ENCODE measurements at regions of chr14 and their contacts with region 1.

Region 1: DNA sequence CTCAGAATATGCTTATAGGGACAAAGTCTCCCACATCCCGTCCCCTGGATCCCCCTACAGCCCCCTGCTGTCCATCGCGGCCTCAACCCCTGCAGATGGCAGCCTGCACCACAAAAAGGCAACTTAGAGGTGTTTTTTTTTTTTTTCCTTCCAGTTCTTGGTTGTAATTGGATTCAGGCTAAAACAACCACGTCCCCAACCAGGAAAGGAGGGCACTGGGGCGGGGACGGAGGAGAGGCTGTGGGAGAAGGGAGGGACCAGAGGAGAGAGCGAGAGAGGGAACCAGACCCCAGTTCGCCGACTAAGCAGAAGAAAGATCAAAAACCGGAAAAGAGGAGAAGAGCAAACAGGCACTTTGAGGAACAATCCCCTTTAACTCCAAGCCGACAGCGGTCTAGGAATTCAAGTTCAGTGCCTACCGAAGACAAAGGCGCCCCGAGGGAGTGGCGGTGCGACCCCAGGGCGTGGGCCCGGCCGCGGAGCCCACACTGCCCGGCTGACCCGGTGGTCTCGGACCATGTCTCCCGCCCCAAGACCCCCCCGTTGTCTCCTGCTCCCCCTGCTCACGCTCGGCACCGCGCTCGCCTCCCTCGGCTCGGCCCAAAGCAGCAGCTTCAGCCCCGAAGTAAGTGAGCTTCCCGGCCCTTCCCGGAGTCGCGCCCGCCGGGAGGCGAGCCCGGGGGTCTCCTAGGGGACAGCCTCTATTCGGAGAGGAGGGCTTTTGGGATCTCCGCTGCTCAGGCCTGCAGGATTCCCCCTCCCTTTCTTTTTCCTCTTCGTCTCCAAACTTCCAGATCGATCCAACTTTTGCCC is at the start of gene MMP14:
- DNase-seq: peak in 1 of 2 experiments; percentile 60
- H3K4me3 ChIP-seq: peak within 1 kb of the TSS; percentile 80 to 99 (median 87)
- H3K27ac ChIP-seq: peak within 1 kb of the TSS; percentile 53
- H3K4me1 ChIP-seq: peaks cover 8 to 17% (median 14%) of the 10 kb centered on the region in 4 experiments
- H3K27me3 ChIP-seq: no peaks in the 10 kb centered on the region
- CTCF ChIP-seq: peak; percentile 29 to 41 (median 34); a peak in 3 of 4 replicates
- EP300 ChIP-seq: no peak
- POLR2A ChIP-seq: peak; percentile 43 to 72; a peak in 2 of 3 replicates
- RAD21 ChIP-seq: peak; percentile 36 to 54
- total RNA-seq, gene MMP14: 83.1 and 86.8 TPM in 2 replicates

Region 2: GRCh38 chr14:22668417-22668816 is 168.1 kb before region 1 on chr14:
- CTCF ChIA-PET with region 1: no interaction called
- POLR2A ChIA-PET with region 1: no interaction called
- DNase-seq: no peak
- H3K4me3 ChIP-seq: no peak overlapping the region
- H3K27ac ChIP-seq: no peak overlapping the region
- H3K4me1 ChIP-seq: no peaks in the 10 kb centered on the region
- H3K27me3 ChIP-seq: no peaks in the 10 kb centered on the region
- CTCF ChIP-seq: no peak
- EP300 ChIP-seq: no peak
- POLR2A ChIP-seq: no peak
- RAD21 ChIP-seq: no peak

Region 3: DNA sequence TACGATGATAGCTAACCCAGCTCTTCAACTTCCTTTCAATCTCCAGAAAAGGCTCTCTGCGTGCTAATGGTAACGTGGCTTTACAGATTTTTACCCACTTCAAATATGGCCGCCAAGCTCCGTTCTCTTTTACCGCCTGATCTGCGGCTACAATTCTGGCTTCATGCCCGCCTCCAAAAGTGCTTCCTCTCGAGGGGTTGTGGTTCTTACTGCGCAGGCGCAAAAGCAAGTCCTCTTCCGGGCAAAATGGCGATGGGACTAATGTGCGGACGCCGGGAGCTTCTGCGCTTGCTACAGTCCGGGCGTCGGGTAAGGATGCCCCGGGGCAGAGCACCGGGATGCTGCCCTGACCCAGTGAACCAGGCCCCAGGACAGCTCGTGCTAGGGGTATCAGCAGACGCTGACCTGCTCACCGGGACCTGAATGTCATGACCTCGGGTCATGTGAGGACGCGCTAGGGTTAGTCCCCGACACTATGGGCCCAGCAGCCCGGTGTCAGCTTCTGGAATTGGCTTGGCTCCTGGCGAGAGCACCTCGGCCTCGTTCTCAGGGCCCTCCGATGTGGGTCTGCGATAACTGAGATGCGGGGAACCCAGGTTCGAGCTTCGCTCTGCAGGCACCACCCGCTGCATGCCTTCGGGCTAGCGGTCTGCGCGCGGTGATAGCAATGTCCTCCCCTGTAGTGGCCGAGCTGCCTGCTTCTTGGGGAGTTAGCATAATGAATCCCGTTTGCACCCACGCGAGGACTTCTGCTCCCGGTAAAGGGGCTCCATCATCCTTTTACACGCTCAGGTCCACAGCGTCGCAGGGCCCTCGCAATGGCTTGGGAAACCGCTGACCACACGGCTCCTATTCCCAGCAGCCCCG is 69.8 kb before region 1 on chr14 and contains the start of gene OXA1L:
- CTCF ChIA-PET with region 1: interaction called, 5 read pairs
- POLR2A ChIA-PET with region 1: interaction called, 10 read pairs
- DNase-seq: peak; percentile 78 to 90
- H3K4me3 ChIP-seq: peak within 1 kb of the TSS; percentile 87 to 97 (median 94)
- H3K27ac ChIP-seq: peak within 1 kb of the TSS; percentile 91
- H3K4me1 ChIP-seq: peaks cover 0 to 2% (median 0%) of the 10 kb centered on the region in 4 experiments; a peak in 2 of 7 replicates
- H3K27me3 ChIP-seq: no peaks in the 10 kb centered on the region
- CTCF ChIP-seq: no peak
- EP300 ChIP-seq: 0 out of 3 replicates have a peak, but pooled peaks of 1 of the 2 experiments have one; percentile 13
- POLR2A ChIP-seq: peak; percentile 50 to 81; a peak in 2 of 3 replicates
- RAD21 ChIP-seq: no peak
- total RNA-seq, gene OXA1L: 125 and 129 TPM in 2 replicates

Region 4: DNA sequence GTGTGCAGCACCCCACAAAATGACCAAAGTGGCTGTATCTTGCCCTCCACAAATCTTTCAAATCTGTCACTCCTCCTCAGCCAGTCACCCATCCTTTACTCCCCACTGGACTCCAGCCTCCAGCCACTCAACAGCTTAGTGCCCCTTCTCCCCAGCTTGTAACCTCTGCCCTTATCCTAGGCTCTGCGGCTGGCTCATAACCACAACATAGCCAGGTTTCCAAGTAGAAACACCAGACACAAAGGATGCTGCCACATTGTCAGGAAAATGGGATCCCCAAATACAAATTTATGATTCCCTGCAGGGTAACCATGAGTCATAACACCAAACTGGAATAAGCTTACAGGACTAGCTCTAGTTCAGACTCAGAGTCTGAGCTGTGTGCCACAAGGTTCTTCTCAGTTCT is 54.9 kb before region 1 on chr14:
- CTCF ChIA-PET with region 1: interaction called, 12 read pairs
- POLR2A ChIA-PET with region 1: interaction called, 3 read pairs
- DNase-seq: no peak
- H3K4me3 ChIP-seq: no peak overlapping the region
- H3K27ac ChIP-seq: no peak overlapping the region
- H3K4me1 ChIP-seq: no peaks in the 10 kb centered on the region; a peak in 1 of 7 replicates
- H3K27me3 ChIP-seq: no peaks in the 10 kb centered on the region
- CTCF ChIP-seq: no peak
- EP300 ChIP-seq: no peak
- POLR2A ChIP-seq: no peak
- RAD21 ChIP-seq: no peak

Region 5: GRCh38 chr14:22886500-22887259 is 50.2 kb after region 1 on chr14:
- CTCF ChIA-PET with region 1: interaction called, 1,562 read pairs
- POLR2A ChIA-PET with region 1: interaction called, 18 read pairs
- DNase-seq: peak in 1 of 2 experiments; percentile 87
- H3K4me3 ChIP-seq: peak overlapping the region; percentile 57 to 83 (median 65)
- H3K27ac ChIP-seq: peak overlapping the region; percentile 25
- H3K4me1 ChIP-seq: peaks cover 7 to 21% (median 12%) of the 10 kb centered on the region in 4 experiments
- H3K27me3 ChIP-seq: peaks cover 0 to 17% (median 11%) of the 10 kb centered on the region in 4 experiments; a peak in 6 of 7 replicates
- CTCF ChIP-seq: peak; percentile 17 to 35 (median 21); a peak in 3 of 4 replicates
- EP300 ChIP-seq: no peak
- POLR2A ChIP-seq: peak in 1 of 2 experiments; percentile 75; a peak in 2 of 3 replicates
- RAD21 ChIP-seq: peak in 1 of 2 experiments; percentile 6; a peak in 2 of 4 replicates

Region 6: GRCh38 chr14:22900081-22900799 is 63.7 kb after region 1 on chr14:
- CTCF ChIA-PET with region 1: interaction called, 34 read pairs
- POLR2A ChIA-PET with region 1: interaction called, 4 read pairs
- DNase-seq: peak in 1 of 2 experiments; percentile 58
- H3K4me3 ChIP-seq: 0 out of 8 replicates have a peak overlapping the region, but pooled peaks of 1 of the 4 experiments have one; percentile 13
- H3K27ac ChIP-seq: no peak overlapping the region
- H3K4me1 ChIP-seq: peaks cover 0 to 8% (median 4%) of the 10 kb centered on the region in 4 experiments; a peak in 2 of 7 replicates
- H3K27me3 ChIP-seq: peaks cover 10 to 35% (median 28%) of the 10 kb centered on the region in 4 experiments
- CTCF ChIP-seq: peak; percentile 1 to 75 (median 64)
- EP300 ChIP-seq: no peak
- POLR2A ChIP-seq: no peak
- RAD21 ChIP-seq: peak; percentile 64 to 75

Region 7: DNA sequence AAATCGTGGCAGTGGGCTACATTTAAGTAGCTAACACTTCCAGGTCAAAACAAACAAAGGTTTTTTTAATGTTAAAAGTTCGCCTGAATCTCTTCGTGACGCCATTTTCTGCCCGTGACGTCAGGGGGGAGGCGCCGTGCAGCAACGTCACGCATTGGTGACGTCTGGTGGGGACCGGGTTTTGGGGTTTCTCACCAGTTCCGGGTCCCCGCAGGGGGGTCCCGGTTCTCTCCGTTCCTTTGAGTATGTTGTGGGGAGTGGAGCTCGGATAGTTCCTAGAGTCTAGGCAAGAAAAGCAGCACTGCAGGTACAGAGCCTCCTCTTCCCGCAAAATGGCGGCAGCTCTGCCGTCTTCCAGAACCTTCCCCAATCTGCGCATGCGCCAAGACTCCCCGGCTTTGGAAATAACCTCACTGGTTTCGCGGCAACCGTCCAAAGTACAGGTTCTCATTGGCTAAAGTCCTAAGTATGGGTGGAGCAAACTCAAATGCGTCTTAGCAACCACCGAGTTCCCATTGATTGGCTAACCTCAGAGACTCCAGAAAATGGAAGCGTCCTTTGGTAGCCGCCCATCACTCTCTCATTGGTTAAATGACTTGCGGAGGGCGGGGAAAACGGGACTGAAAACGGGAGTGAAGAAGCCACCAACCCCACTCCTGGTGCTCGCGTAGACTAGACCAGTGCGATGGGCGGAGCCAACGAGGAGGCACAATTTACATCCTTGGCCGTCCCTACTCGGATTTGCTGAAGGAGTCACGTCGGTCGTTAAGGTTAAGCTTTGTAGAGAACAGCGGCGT is 82.5 kb after region 1 on chr14 and contains the start of gene RBM23:
- CTCF ChIA-PET with region 1: no interaction called
- POLR2A ChIA-PET with region 1: interaction called, 10 read pairs
- DNase-seq: peak; percentile 98 to 99
- H3K4me3 ChIP-seq: peak within 1 kb of the TSS; percentile 79 to 93 (median 92)
- H3K27ac ChIP-seq: peak within 1 kb of the TSS; percentile 98
- H3K4me1 ChIP-seq: peaks cover 0 to 7% (median 3%) of the 10 kb centered on the region in 4 experiments; a peak in 5 of 7 replicates
- H3K27me3 ChIP-seq: no peaks in the 10 kb centered on the region; a peak in 1 of 7 replicates
- CTCF ChIP-seq: no peak
- EP300 ChIP-seq: no peak
- POLR2A ChIP-seq: peak; percentile 80 to 98
- RAD21 ChIP-seq: no peak
- total RNA-seq, gene RBM23: 43.1 and 43.3 TPM in 2 replicates

Region 8: DNA sequence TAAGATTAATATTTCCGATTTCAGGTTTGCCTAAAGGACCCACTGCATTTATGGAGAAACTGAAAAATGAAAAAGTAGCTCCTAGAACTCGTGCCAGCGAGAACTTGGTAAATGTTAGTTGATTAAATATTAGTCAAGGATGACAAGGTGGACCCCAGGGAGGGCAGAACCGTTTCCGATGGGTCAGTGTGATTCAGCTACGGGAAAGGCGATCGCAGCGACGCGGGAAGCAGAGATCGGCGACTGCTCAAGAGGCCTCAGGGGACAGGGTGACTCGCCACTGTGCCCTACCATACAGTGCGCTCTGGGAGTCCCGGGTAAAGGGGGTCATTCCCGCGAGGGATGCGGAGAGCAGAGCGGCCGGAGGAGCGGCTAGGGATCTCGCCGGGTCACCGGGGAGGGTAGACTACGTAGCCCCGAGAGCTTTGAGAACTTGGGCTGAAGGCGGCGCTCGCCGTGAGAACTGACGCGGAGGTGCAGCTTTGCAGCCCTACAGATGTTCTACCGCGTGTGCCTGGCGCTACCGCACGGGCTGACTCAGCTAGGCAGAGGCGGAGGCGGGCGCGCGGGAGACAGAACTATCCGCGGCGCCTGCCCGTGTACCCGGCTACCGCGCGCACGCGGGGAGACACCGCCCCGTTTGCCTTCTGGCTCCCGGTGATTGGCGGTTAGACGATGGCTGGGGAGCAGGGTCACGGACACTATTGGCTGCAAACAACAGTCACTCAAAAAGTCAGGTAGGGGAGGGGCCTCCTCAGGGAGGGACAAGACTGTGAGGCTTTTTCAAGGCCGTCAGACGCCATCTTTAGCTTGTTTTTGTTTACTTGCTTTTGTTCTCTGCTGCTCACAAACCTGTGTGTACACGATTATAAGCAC is 170.3 kb after region 1 on chr14:
- CTCF ChIA-PET with region 1: no interaction called
- POLR2A ChIA-PET with region 1: no interaction called
- DNase-seq: peak; percentile 89 to 92
- H3K4me3 ChIP-seq: peak overlapping the region; percentile 73 to 85 (median 76)
- H3K27ac ChIP-seq: peak overlapping the region; percentile 89
- H3K4me1 ChIP-seq: peaks cover 4 to 7% (median 6%) of the 10 kb centered on the region in 4 experiments; a peak in 4 of 7 replicates
- H3K27me3 ChIP-seq: no peaks in the 10 kb centered on the region
- CTCF ChIP-seq: peak in 1 of 3 experiments; percentile 27; a peak in 2 of 4 replicates
- EP300 ChIP-seq: no peak
- POLR2A ChIP-seq: peak; percentile 74 to 99
- RAD21 ChIP-seq: no peak

Measured in H1 (cell line).